WTC11 (cell line): ENCODE measurements at regions of chr5 and their contacts with region 1.

Region 1: DNA sequence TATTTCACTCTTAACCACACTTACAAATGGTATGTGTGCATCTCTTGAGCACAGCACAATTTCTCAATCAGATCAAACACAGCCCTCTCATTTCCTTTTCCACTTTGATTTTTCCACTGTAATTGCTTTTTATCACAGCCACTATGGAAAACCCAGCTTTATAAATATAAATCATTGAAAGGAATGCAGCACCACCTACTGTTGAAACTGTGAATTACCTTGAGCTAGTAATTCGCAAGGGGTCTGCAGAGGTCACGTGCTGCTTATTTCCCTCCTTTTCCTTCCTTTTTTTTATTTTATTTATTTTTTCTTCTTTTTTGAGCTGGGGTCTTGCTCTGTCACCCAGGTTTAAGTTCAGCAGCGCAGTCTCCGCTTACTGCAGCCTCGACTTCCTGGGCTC is 76.9 kb downstream of the CDH6 start:
- DNase-seq: no peak
- ATAC-seq: no peak
- H3K4me3 Mint-ChIP-seq: no peak overlapping the region
- H3K27ac Mint-ChIP-seq: no peak overlapping the region
- H3K4me1 Mint-ChIP-seq: peaks cover 41% of the 10 kb centered on the region
- H3K27me3 Mint-ChIP-seq: no peaks in the 10 kb centered on the region
- CTCF ChIP-seq: peak; percentile 81

Region 2: DNA sequence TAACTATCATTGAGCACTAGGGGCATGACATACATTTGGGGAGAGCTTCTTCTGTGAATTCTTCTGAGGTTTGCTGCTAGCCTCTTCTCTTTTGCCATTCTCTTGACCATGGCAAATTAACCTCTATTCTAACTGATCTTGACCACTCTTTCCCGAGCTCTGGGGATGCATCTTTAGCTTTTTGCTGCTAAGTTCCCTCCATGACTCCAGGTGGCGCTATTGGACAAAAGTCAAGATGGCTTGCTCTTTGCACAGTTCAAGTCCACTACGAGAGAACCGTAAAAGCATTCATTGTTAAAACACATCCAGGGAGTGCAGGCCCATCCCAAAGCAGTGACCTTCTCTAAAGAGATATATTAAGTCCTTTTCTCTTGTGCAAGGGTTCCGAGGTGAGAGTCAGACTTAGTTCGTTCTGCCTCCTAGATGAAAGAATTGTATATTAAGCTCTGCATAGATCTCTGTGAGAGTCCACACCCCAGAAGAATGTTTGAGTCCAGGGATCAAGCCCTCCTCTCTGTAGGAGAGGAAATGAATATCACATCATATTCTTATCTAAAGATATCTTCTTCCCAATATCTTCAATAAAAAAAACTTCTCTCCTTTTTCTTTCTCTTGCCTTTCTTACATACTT is 1229.8 kb before region 1 on chr5:
- CTCF ChIA-PET with region 1: interaction called, 12 read pairs
- POLR2A ChIA-PET with region 1: no interaction called
- DNase-seq: peak; percentile 54
- ATAC-seq: peak; percentile 93
- H3K4me3 Mint-ChIP-seq: no peak overlapping the region
- H3K27ac Mint-ChIP-seq: no peak overlapping the region
- H3K4me1 Mint-ChIP-seq: peaks cover 5% of the 10 kb centered on the region
- H3K27me3 Mint-ChIP-seq: no peaks in the 10 kb centered on the region
- CTCF ChIP-seq: peak; percentile 72

Region 3: DNA sequence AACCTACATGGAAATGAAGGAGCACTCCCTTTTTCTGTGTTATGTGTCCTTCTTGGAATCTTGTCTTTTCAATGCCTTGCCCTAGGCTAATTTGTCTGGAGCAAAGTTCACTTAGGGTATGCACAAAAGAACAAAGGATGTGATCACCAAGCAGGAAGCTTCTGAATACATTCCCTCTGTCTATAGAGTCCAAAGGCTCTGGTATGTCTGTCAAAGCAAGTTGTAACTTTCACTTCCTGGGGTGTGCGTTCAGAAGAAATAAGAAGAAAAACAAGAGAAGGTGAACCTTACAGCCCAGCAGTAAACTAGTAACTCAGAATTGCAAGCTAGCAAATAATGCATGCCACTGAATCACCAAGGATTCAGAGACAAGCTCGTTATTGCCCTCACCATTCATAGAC is 108.6 kb before region 1 on chr5:
- CTCF ChIA-PET with region 1: no interaction called
- POLR2A ChIA-PET with region 1: no interaction called
- DNase-seq: no peak
- ATAC-seq: peak; percentile 89
- H3K4me3 Mint-ChIP-seq: no peak overlapping the region
- H3K27ac Mint-ChIP-seq: peak overlapping the region; percentile 76
- H3K4me1 Mint-ChIP-seq: peaks cover 35% of the 10 kb centered on the region
- H3K27me3 Mint-ChIP-seq: no peaks in the 10 kb centered on the region
- CTCF ChIP-seq: no peak

Region 4: GRCh38 chr5:31193591-31194467 is 76.6 kb before region 1 on chr5 and contains the start of gene CDH6:
- CTCF ChIA-PET with region 1: interaction called, 11 read pairs
- POLR2A ChIA-PET with region 1: no interaction called
- DNase-seq: peak; percentile 82
- ATAC-seq: peak; percentile 94
- H3K4me3 Mint-ChIP-seq: peak within 1 kb of the TSS; percentile 85
- H3K27ac Mint-ChIP-seq: no peak within 1 kb of the TSS
- H3K4me1 Mint-ChIP-seq: peaks cover 31% of the 10 kb centered on the region
- H3K27me3 Mint-ChIP-seq: peaks cover 55% of the 10 kb centered on the region
- CTCF ChIP-seq: no peak
- total RNA-seq, gene CDH6: 0.87 to 2.6 TPM (median 1.1 TPM) in 3 replicates

Region 5: GRCh38 chr5:31213705-31214121 is 56.7 kb before region 1 on chr5:
- CTCF ChIA-PET with region 1: interaction called, 10 read pairs
- POLR2A ChIA-PET with region 1: no interaction called
- DNase-seq: no peak
- ATAC-seq: peak; percentile 52; the same call in 1 of the 2 replicates
- H3K4me3 Mint-ChIP-seq: peak overlapping the region; percentile 39
- H3K27ac Mint-ChIP-seq: no peak overlapping the region
- H3K4me1 Mint-ChIP-seq: peaks cover 12% of the 10 kb centered on the region
- H3K27me3 Mint-ChIP-seq: no peaks in the 10 kb centered on the region
- CTCF ChIP-seq: no peak

Region 6: GRCh38 chr5:31232273-31232888 is 38.0 kb before region 1 on chr5:
- CTCF ChIA-PET with region 1: interaction called, 43 read pairs
- POLR2A ChIA-PET with region 1: no interaction called
- DNase-seq: peak; percentile 14
- ATAC-seq: peak; percentile 89
- H3K4me3 Mint-ChIP-seq: no peak overlapping the region
- H3K27ac Mint-ChIP-seq: no peak overlapping the region
- H3K4me1 Mint-ChIP-seq: peaks cover 16% of the 10 kb centered on the region
- H3K27me3 Mint-ChIP-seq: no peaks in the 10 kb centered on the region
- CTCF ChIP-seq: peak; percentile 33; the same call in 1 of the 2 replicates

Region 7: GRCh38 chr5:31251032-31251431 is 19.4 kb before region 1 on chr5:
- CTCF ChIA-PET with region 1: interaction called, 16 read pairs
- POLR2A ChIA-PET with region 1: no interaction called
- DNase-seq: no peak
- ATAC-seq: peak; percentile 72
- H3K4me3 Mint-ChIP-seq: no peak overlapping the region
- H3K27ac Mint-ChIP-seq: no peak overlapping the region
- H3K4me1 Mint-ChIP-seq: no peaks in the 10 kb centered on the region
- H3K27me3 Mint-ChIP-seq: no peaks in the 10 kb centered on the region
- CTCF ChIP-seq: no peak

Region 8: DNA sequence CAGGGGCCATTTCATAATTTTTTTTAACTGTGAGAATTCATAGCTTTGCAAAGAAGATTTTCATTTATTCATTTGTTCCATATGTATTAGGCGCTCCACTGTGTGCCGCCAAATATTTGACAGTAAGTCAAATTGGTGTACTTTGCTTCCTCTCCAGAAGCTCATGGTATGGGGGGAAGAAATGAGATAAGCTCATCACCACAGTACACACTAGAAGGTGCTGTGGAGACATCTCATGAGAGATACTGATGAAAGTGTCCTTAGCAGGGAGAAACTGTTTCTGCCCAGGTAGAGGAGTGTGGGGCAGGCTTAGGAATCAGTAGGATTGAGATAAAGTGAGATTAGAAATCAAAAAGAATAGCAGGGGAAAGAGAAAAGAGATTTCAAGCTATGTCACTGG is 59.3 kb after region 1 on chr5:
- CTCF ChIA-PET with region 1: no interaction called
- POLR2A ChIA-PET with region 1: no interaction called
- DNase-seq: no peak
- ATAC-seq: no peak
- H3K4me3 Mint-ChIP-seq: no peak overlapping the region
- H3K27ac Mint-ChIP-seq: no peak overlapping the region
- H3K4me1 Mint-ChIP-seq: no peaks in the 10 kb centered on the region
- H3K27me3 Mint-ChIP-seq: no peaks in the 10 kb centered on the region
- CTCF ChIP-seq: no peak

Region 9: DNA sequence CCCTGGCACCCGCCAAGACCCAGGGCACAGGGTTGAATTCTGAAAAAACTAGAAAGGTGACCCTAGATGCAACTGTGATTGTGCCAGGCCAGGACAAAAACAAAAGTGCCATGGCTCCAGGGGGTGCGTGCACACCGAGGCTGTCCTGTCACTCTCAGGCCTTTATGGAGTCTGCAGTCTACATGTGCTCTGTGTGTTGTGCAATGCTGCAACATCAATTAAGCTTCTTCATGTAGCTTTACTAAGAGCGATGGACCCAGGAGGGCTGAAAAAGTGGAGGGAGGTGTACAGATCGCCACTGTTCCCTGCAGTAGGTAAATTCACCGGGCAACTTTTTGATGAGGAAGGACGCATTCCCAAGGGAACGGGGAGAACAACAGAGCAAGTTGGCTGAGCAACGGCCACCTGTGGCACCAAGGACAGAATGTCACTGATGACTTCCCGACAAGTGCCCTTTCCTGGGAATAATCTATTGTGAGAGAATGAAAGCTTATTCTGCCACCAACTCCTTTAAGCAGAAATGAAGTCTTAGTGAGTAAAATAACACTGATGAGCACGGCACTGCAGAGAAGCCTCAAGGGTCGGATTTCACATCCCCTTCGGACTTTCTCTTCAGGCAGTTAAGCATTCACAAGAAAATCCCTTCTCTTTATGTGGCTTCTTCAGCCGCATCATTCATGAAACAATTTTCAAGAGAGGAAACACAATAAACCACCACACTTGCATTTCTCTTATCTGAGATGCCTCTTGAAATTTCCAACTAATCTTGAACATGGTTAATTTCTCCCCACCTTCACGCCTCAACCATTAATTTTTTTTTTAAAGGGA is 111.9 kb after region 1 on chr5:
- CTCF ChIA-PET with region 1: interaction called, 10 read pairs
- POLR2A ChIA-PET with region 1: no interaction called
- DNase-seq: no peak
- ATAC-seq: peak; percentile 65
- H3K4me3 Mint-ChIP-seq: no peak overlapping the region
- H3K27ac Mint-ChIP-seq: no peak overlapping the region
- H3K4me1 Mint-ChIP-seq: peaks cover 26% of the 10 kb centered on the region
- H3K27me3 Mint-ChIP-seq: no peaks in the 10 kb centered on the region
- CTCF ChIP-seq: no peak